Heart right ventricle (tissue), 16 donors: ENCODE measurements at regions of chr6 and their contacts with region 1.

Region 1: GRCh38 chr6:13336553-13336952 is 8.2 kb upstream of the TBC1D7 start:
- DNase-seq: peak; percentile 82 to 84
- ATAC-seq: peak; percentile 66 to 85 (median 72)
- H3K4me3 ChIP-seq: no peak overlapping the region
- H3K27ac ChIP-seq: peak overlapping the region in 1 of 10 donors; percentile 40
- H3K4me1 ChIP-seq: peaks cover 0 to 29% (median 8%) of the 10 kb centered on the region in 9 donors
- H3K27me3 ChIP-seq: no peaks in the 10 kb centered on the region
- CTCF ChIP-seq: peak; percentile 70 to 95 (median 90)

Region 2: GRCh38 chr6:13375360-13375878 is 38.9 kb after region 1 on chr6:
- intact Hi-C with region 1: no loop called
- DNase-seq: no peak
- ATAC-seq: no peak
- H3K4me3 ChIP-seq: no peak overlapping the region
- H3K27ac ChIP-seq: no peak overlapping the region
- H3K4me1 ChIP-seq: peaks cover 11 to 62% (median 33%) of the 10 kb centered on the region in 9 donors
- H3K27me3 ChIP-seq: no peaks in the 10 kb centered on the region
- CTCF ChIP-seq: no peak

Region 3: DNA sequence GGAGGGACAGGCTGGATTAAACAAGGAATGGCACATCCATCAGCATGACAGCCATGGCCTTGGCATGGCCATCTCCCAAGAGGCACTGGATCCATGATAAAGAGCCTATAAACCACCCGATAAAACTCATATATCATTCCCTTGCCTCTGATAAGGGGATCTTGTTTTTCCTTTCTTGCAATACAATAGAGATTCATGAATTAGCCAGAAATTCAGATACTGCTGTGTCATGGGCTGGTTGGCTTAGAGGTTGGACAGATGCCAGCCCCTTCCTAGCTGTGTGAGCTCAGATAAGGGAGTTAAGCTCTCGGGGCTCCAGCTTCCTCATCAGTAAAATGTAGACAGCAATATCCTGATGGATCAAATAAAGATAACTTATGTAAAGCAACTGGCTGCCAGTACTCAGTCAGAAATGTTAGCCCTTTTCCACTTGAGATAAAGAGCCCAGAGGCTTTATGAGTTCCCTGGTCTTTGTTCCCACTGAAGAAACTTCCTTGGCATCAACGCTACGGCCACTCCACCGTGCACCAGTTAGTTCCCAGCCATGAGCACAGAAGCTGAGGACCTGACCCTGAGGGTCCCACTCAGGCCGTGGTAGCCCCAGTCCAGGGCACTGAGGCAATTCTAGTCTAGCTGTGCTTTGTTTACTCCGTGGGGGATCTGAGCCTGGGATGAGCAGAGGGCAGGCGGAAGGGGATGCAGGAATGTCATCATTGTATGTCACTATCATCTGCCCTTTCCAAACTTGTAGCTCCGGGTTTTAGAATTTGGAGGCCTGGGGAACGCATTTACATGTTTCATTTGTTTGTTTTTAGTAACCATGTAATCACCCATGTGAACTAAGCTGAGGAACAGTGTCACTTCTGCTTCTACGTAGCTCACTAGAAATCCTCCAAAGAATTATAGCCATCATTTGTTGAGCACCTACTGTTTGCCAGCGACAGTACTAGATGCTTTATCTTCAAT is 59.0 kb after region 1 on chr6:
- intact Hi-C with region 1: loop called in 1 of 10 experiments (anchors 5 kb)
- DNase-seq: peak; percentile 57 to 85
- ATAC-seq: peak; percentile 68 to 89 (median 78)
- H3K4me3 ChIP-seq: no peak overlapping the region
- H3K27ac ChIP-seq: peak overlapping the region; percentile 26 to 84 (median 77)
- H3K4me1 ChIP-seq: peaks cover 5 to 63% (median 57%) of the 10 kb centered on the region in 9 donors
- H3K27me3 ChIP-seq: no peaks in the 10 kb centered on the region
- CTCF ChIP-seq: no peak

Region 4: GRCh38 chr6:13487122-13488014 is 150.8 kb after region 1 on chr6 and contains the start of gene GFOD1:
- intact Hi-C with region 1: loop called in 3 of 10 experiments (anchors 2 to 5 kb)
- DNase-seq: peak; percentile 90 to 92
- ATAC-seq: peak; percentile 83 to 94 (median 86)
- H3K4me3 ChIP-seq: peak within 1 kb of the TSS; percentile 69 to 98 (median 90)
- H3K27ac ChIP-seq: peak within 1 kb of the TSS; percentile 91 to 98 (median 94)
- H3K4me1 ChIP-seq: peaks cover 3 to 46% (median 39%) of the 10 kb centered on the region in 9 donors
- H3K27me3 ChIP-seq: no peaks in the 10 kb centered on the region
- CTCF ChIP-seq: peak in 4 of 9 donors; percentile 20 to 40 (median 32)
- total RNA-seq, gene GFOD1: 26.5 to 96.5 (median 41.0) TPM

Region 5: DNA sequence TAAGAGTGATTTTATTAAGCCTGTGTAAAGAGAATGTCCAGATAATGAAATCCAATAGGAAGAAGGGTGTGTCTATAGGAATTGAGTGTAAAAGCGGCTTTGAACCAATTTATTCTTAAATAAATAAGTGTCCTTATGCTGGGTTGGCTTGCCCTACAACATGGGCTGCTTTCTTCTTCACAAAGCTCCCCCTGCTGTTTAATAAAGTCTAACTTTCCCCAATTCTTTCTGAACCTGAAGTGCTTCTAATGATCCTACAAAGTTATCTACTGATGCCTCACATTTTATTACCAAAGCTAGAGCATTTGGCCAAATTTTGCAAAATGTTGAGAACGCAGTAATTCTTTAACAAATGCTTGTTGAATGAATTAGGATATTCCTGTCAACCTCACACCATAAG is 201.5 kb after region 1 on chr6:
- intact Hi-C with region 1: loop called (anchors 1 to 10 kb)
- DNase-seq: no peak
- ATAC-seq: peak in 7 of 8 donors; percentile 69 to 84 (median 75)
- H3K4me3 ChIP-seq: no peak overlapping the region
- H3K27ac ChIP-seq: peak overlapping the region in 7 of 10 donors; percentile 24 to 71 (median 34)
- H3K4me1 ChIP-seq: peaks cover 0 to 33% (median 12%) of the 10 kb centered on the region in 9 donors
- H3K27me3 ChIP-seq: no peaks in the 10 kb centered on the region
- CTCF ChIP-seq: peak; percentile 28 to 73 (median 59)

Region 6: DNA sequence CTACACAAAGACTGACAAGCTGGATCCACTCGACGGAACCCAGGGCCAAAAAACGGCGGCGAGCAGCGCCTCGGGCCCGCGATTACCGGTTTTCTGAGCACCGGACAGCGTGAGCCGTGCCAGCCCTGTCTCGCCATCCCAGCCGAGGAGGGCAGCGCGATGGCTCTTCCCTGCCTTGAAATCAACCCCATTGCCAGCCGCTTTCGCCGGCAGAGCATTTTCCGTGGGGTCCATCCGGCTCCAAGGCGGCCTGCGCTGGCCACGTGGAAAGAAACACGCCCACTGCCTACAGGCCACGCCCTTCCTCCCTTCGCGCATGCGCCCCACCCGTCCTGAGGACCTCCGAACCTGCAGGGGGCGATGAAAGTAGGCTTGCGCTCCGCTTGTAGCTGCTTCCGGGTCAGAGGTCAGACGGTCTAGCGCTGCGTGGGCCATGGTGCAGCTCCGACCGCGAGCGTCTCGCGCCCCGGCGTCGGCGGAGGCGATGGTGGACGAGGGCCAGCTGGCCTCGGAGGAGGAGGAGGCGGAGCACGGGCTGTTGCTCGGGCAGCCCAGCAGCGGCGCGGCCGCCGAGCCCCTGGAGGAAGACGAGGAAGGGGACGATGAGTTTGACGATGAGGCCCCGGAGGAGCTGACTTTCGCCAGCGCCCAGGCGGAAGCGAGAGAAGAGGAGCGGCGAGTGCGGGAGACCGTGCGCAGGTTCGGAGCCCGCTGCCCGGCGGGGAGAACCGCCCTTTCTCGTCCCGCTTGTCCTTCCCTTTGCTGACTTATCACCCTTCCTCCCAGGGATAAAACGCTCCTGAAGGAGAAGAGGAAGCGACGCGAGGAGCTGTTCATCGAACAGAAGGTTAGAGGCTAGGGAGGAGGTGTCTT is 278.6 kb after region 1 on chr6 and contains the start of gene NOL7:
- intact Hi-C with region 1: loop called in 2 of 10 experiments (anchors 5 to 10 kb)
- DNase-seq: peak; percentile 98
- ATAC-seq: peak; percentile 95 to 98 (median 98)
- H3K4me3 ChIP-seq: peak within 1 kb of the TSS; percentile 68 to 99 (median 90)
- H3K27ac ChIP-seq: peak within 1 kb of the TSS; percentile 43 to 95 (median 90)
- H3K4me1 ChIP-seq: peaks cover 2 to 54% (median 37%) of the 10 kb centered on the region in 9 donors
- H3K27me3 ChIP-seq: no peaks in the 10 kb centered on the region
- CTCF ChIP-seq: peak; percentile 81 to 98 (median 93)
- total RNA-seq, gene NOL7: 41.5 to 55.8 (median 46.8) TPM